Posterior cingulate gyrus (tissue), 11 donors: ENCODE measurements at regions of chr9 and their contacts with region 1.

Region 1: GRCh38 chr9:121213136-121213806 is 11.6 kb upstream of the RAB14 start:
- DNase-seq: peak; percentile 80 to 99 (median 94)

Region 2: GRCh38 chr9:121261107-121261460 is 47.8 kb after region 1 on chr9:
- intact Hi-C with region 1: loop called (anchors 5 kb)
- DNase-seq: peak; percentile 64 to 97 (median 72)

Region 3: GRCh38 chr9:121278535-121279261 is 65.4 kb after region 1 on chr9:
- intact Hi-C with region 1: no loop called
- DNase-seq: peak in 2 of 10 donors; percentile 62 to 93

Region 4: GRCh38 chr9:121376214-121376830 is 163.1 kb after region 1 on chr9:
- intact Hi-C with region 1: loop called (anchors 1 kb)
- DNase-seq: no peak

Region 5: GRCh38 chr9:121399883-121400607 is 186.8 kb after region 1 on chr9:
- intact Hi-C with region 1: loop called (anchors 1 kb)
- DNase-seq: no peak